BJ (cell line): ENCODE measurements at regions of chr4 and their contacts with region 1.

Region 1: DNA sequence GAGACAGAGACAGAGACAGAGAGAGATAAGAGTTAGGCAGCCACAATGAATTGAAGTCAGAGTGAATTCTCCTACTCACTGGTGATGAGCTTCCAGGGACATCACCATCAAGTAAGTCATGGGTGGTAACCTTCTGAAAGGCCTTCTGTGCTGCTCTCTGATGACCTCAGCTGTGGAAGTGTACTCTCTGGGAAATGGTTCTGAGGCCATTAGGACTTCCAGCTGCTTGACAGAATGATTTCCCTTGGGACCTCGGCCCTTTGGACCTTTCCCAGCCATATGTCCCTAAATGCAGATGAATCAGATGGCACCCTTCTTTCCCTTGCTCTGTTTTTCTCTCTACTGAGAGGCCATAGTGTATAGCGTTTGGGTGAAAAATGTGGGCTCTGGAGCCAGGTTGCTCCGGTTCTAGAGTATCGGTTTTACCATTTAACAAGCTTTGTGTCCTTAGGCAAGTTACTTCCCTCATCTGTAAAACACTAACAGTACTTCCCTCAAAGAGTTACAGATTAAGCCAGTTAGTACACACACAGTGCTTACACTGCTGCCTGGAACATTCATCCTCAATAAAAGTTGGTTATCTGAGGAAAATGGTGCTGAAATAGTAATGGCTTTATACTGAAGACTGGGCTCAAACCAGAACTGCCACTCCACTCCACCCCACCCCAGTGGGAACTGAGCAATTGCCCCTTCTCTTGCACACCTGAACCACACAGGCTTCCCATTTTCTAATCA is 7.6 kb downstream of the SEPTIN11 start:
- DNase-seq: no peak
- H3K4me3 ChIP-seq: no peak overlapping the region
- H3K27me3 ChIP-seq: no peaks in the 10 kb centered on the region
- CTCF ChIP-seq: no peak

Region 2: GRCh38 chr4:76977736-76978350 is 20.7 kb after region 1 on chr4:
- CTCF ChIA-PET with region 1: interaction called, 3 read pairs
- POLR2A ChIA-PET with region 1: interaction called, 27 read pairs
- DNase-seq: no peak
- H3K4me3 ChIP-seq: no peak overlapping the region
- H3K27me3 ChIP-seq: no peaks in the 10 kb centered on the region
- CTCF ChIP-seq: no peak